ENCODE measurements at regions of chr1 and their contacts with region 1.

Region 1: DNA sequence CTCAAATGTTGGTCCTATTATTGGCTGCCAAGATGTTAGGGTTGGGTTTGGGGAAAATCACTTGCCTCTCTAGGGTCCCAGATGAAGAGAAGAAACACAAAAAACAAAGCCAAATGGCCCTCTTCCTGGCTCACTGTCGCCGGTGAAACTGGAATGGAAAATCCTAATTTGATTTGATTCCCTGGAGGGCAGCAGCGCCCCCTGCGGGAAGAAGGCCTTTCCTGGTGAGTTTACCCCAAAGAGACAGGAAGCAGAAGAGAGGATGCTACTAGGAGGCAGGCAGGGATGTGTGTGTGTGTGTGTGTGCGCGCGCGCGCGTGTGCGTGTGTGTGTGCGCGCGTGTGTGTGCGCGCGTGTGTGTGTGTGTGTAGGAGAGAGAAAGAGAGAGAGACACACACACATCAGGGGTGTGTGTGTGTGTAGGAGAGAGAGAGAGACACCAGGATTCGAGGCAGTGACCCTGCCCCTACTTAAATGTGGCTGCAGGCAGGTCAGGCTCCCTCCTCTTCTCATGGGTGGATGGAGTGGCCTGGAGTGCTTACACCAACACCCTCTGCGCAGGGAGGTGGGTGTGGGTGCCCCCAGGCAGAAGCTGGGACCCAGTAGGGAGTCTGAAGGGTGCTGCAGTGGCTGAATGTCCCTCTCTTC is 3.1 kb upstream of the SELENON start:
- DNase-seq: peak; percentile 70 to 90 (median 83)
- ATAC-seq: peak; percentile 52 to 70
- H3K4me3 Mint-ChIP-seq: peak overlapping the region; percentile 50 to 92 (median 83)
- H3K27ac Mint-ChIP-seq: peak overlapping the region; percentile 91 to 99 (median 96)
- H3K4me1 Mint-ChIP-seq: peaks cover 34 to 74% (median 65%) of the 10 kb centered on the region in 4 donors
- H3K27me3 Mint-ChIP-seq: peaks cover 0 to 2% (median 0%) of the 10 kb centered on the region in 5 donors

Region 2: DNA sequence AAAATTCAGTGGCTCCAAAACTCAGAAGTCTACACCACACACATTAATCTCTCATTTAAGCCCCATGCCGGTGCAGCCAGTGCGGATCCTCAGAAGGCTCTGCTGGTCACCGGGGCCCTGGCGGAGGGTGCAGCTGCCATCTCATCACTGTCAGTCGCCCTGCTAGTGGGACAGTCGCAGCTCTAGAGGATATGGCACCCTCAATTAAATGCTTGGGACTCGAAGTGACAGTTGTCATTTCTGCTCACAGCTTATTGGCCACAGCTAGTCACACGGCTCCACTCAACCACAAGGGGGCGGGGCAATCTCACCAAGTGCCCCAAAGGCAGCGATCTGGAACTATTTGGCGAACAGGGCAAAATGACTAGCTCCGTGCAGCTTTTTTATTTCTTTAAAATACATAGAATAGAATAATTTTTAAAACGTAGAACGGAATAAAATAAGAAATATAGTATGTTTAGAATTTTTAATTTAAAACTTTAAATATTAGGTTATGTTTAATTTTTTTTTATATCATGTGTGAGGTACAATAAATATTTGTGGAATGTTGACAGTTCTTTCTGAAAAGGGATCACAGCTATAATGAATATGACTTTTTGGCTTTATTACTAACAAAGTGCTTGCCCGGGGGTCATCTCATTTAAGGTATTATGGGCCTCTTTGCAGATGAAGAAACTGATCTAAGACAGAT is 188.3 kb before region 1 on chr1:
- POLR2A ChIA-PET with region 1: interaction called, 10 read pairs
- DNase-seq: peak; percentile 76 to 93 (median 82)
- ATAC-seq: peak; percentile 99 to 100
- H3K4me3 Mint-ChIP-seq: peak overlapping the region; percentile 5 to 74 (median 32)
- H3K27ac Mint-ChIP-seq: peak overlapping the region in 4 of 10 donors; percentile 5 to 80 (median 56)
- H3K4me1 Mint-ChIP-seq: peaks cover 4 to 23% (median 11%) of the 10 kb centered on the region in 4 donors
- H3K27me3 Mint-ChIP-seq: peaks cover 0 to 5% (median 0%) of the 10 kb centered on the region in 5 donors

Region 3: GRCh38 chr1:25771246-25772114 is 25.5 kb before region 1 on chr1:
- POLR2A ChIA-PET with region 1: interaction called, 18 read pairs
- DNase-seq: peak in 9 of 10 donors; percentile 27 to 76 (median 54)
- ATAC-seq: peak; percentile 11 to 12
- H3K4me3 Mint-ChIP-seq: peak overlapping the region; percentile 41 to 88 (median 78)
- H3K27ac Mint-ChIP-seq: peak overlapping the region; percentile 85 to 99 (median 98)
- H3K4me1 Mint-ChIP-seq: peaks cover 59 to 100% (median 83%) of the 10 kb centered on the region in 4 donors
- H3K27me3 Mint-ChIP-seq: peaks cover 0 to 3% (median 0%) of the 10 kb centered on the region in 5 donors